ENCODE measurements at regions of chr13 and their contacts with region 1.

Region 1: DNA sequence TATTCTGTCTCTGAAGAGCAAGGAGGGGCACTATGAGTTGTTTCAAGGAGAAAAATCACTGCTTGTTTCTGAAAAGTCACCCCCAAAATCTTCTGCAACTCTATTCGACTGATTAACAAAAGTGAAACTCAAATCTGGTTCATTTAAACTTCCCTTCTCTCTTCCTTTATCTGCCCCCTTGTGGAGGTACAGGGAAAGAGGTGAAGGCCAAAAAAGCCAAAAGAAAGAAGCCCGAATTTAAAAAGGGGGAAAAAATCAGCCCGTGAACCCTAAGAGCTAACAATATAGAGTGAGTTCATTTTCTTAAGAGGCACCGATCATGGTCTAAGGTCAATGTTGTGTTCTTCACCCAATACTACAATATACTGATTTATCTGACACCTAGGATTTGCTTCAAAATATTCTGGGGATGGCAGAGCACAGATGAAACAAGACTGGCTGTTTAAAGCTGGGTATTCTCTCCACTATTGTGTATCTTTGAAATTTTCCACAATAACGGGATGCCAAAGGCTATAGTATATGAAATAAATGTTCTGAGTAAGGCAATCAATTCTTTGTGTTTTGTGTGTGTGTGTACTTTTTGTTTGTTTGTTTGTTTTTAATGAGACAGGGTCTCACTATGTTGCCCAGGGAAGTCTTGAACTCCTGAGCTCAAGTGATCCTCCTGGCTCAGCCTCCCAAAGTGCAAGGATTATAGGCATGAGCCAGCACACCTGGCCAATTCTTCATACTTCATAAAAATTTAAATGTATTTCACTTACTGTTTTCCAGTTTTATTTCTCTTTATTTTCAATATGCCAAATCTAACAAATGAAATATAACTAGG is 55.0 kb upstream of the EEF1AKMT1 start:
- DNase-seq: no peak
- ATAC-seq: peak; percentile 38 to 41

Region 2: DNA sequence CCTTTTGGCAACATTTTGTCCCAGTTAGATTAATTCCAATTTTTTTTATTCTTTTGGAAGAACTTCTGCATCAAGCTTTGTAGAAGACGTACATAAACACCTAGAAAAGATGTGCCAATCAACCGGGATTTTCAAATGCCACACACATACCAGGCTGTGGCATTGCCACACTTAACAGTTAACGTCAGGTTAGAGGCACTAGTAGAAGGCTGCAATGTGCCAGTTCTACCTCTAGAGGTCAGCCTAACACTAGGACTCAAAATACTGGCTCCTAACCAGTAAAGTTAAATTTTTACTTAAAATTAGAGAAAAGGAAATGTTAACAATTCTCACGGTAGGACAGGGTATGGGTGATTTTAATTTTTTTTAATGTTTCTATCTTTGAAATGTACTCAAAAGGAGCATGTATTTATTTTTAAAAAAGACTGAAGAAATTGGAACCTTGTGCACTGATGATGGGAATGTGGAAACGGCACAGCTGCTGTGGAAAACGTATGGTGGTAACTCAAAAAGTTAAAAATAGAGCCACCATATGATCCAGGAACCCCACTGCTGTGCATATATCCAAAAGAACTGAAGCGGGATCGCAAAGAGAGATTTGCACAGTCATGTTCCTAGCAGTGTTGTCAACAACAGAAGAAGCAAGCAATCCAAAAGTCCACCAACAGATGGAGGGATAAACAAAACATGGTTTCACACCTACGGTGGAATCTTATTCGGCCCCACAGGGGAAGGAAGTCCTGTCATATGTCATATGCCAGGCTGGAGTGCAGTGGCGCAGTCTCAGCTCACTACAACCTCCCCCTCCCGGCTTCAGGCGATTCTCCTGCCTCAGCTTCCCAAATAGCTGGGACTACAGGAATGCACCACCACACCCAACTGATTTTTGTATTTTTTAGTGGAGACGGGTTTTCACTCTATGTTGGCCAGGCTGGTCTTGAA is 333.4 kb before region 1 on chr13:
- intact Hi-C with region 1: loop called in 1 of 2 experiments (anchors 5 kb)
- DNase-seq: no peak
- ATAC-seq: peak; percentile 85 to 86

Region 3: DNA sequence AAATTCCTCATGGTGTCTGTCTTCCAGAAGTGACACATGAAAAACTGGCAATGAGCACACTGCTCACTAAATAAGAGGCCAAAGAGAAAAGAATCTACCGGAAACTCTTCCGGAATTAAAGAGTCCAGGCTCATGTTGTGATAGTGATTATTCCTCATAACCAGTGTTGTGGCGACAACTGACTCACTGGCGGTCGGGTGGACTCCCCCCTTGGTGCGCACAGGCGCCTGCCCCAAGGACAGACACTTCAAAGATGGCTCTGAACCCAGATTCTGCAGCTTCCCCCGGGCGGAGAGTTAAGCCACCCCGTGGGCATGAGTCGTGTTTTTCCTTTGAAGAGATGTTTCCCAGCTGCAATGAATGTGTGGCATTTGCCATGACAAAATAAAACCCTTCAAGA is 115.0 kb before region 1 on chr13:
- intact Hi-C with region 1: loop called (anchors 5 kb)
- DNase-seq: peak; percentile 59
- ATAC-seq: peak; percentile 9 to 72

Region 4: GRCh38 chr13:20773194-20774080 is 55.3 kb before region 1 on chr13 and contains the start of gene EEF1AKMT1:
- intact Hi-C with region 1: loop called in 1 of 2 experiments (anchors 10 kb)
- DNase-seq: peak; percentile 96
- ATAC-seq: peak; percentile 99
- total RNA-seq, gene EEF1AKMT1: 9.4 to 13.1 TPM

Region 5: DNA sequence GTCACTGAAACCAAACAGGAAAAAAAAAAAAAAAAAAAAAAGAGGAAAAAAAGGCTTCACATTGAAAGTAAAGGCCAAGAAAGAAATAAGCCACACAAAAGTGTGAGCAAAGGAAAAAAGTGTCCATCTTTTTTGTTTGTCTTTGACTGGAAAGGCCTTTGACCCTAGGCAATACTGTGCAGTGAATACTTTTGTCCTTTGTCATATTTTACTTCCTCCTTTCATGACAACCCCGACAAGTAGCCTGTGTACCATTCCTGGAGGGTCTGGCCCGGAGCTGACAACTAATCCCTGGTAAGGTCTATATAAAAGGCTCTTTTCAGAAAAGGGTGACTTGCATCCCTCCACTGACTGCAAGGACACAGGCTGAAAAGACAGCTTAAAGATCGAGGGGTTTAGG is 788.1 kb after region 1 on chr13:
- intact Hi-C with region 1: no loop called
- DNase-seq: no peak
- ATAC-seq: no peak